Activated naive CD4-positive, alpha-beta T cell treated with anti-CD3 and anti-CD28 coated beads for 36 hours (primary cell): ENCODE measurements at regions of chr2 and their contacts with region 1.

Region 1: DNA sequence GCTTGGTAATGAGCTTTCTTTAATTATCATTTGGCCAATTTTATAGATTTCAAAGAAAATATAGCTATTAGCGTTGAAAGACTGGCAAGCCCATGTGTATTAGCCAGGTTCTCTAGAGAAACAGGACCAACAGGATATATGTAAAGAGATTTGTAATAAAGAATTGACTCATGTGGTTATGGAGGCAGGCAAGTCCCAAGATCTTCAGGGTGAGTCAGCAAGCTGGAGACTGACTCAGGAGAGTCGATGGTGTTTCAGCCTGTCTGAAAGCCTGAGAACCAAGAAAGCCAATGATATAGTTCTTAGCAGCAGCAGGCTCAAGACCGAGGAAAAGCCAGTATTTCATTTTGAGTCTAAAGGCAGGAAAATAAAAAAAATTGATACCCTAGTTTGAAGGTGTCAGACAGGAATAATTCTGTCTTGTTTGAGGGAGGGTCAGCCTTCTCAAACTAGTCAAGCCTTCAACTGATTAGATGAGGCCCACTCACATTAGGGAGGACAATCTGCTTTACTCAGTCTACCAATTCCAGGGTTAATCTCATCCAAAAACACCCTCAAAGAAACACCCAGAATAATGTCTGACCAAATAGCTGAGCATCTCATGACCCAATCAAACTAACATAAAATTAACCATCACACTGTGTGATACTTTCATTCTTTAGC is 78.3 kb upstream of the CRIM1 start:
- DNase-seq: peak; percentile 59
- H3K4me3 Mint-ChIP-seq: no peak overlapping the region
- H3K27ac Mint-ChIP-seq: no peak overlapping the region
- H3K4me1 Mint-ChIP-seq: no peaks in the 10 kb centered on the region
- H3K27me3 Mint-ChIP-seq: no peaks in the 10 kb centered on the region

Region 2: DNA sequence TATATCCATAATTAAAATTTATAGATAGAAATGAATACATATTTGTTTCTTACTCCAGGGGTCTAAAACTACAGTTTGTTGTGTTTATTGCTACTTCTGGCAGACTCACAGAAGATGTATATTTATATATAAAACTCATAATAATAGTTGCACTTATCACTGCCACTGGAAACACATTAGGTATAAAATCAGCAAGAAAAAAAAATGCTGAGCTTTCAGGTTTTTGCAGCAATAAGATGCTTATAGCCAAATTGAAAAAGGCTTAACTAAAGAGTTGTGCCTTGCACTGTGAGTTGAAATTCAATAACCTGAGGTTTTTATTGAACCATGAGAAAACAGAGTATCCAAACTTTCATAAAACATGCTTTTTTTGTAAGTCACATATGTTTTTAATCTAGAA is 545.6 kb before region 1 on chr2:
- CTCF ChIA-PET with region 1: no interaction called
- intact Hi-C with region 1: no loop called
- DNase-seq: no peak
- H3K4me3 Mint-ChIP-seq: no peak overlapping the region
- H3K27ac Mint-ChIP-seq: no peak overlapping the region
- H3K4me1 Mint-ChIP-seq: no peaks in the 10 kb centered on the region
- H3K27me3 Mint-ChIP-seq: peaks cover 6% of the 10 kb centered on the region

Region 3: GRCh38 chr2:36307441-36307840 is 30.2 kb after region 1 on chr2:
- CTCF ChIA-PET with region 1: no interaction called
- intact Hi-C with region 1: loop called (anchors 2 kb)
- DNase-seq: no peak
- H3K4me3 Mint-ChIP-seq: no peak overlapping the region
- H3K27ac Mint-ChIP-seq: no peak overlapping the region
- H3K4me1 Mint-ChIP-seq: peaks cover 23% of the 10 kb centered on the region
- H3K27me3 Mint-ChIP-seq: peaks cover 3% of the 10 kb centered on the region